Mammary epithelial cell (primary cell): ENCODE measurements at regions of chr6 and their contacts with region 1.

Region 1: GRCh38 chr6:133674661-133675060 is 214.3 kb upstream of the TCF21 start:
- DNase-seq: no peak
- H3K4me3 ChIP-seq: no peak overlapping the region
- H3K27ac ChIP-seq: no peak overlapping the region
- H3K4me1 ChIP-seq: no peaks in the 10 kb centered on the region
- H3K27me3 ChIP-seq: no peaks in the 10 kb centered on the region
- CTCF ChIP-seq: no peak

Region 2: GRCh38 chr6:133631421-133631820 is 43.2 kb before region 1 on chr6:
- CTCF ChIA-PET with region 1: no interaction called
- dilution Hi-C with region 1: loop called (anchors 5 kb)
- in situ Hi-C with region 1: no loop called
- intact Hi-C with region 1: no loop called
- DNase-seq: no peak
- H3K4me3 ChIP-seq: no peak overlapping the region
- H3K27ac ChIP-seq: no peak overlapping the region
- H3K4me1 ChIP-seq: peaks cover 4% of the 10 kb centered on the region
- H3K27me3 ChIP-seq: no peaks in the 10 kb centered on the region
- CTCF ChIP-seq: no peak